BJ (cell line): ENCODE measurements at regions of chr2 and their contacts with region 1.

Region 1: DNA sequence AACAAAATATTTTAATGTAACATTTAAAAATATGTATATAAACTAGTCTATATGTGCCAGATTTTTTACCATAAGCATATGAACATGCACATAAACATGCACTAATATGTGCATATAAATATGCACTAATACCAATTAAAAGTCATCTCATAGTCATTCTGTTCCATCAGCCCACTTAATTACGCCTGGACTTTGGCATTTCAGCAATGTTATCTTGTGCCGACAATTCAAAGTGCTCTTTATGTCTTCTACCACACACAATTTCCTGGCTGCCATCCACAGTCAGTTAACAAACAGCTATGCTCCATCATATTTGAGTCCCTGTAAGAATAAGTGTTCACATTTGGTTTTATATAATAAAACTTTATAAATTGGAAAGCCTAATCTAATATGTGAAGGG is 92.6 kb upstream of the TSPYL6 start:
- DNase-seq: no peak
- H3K4me3 ChIP-seq: no peak overlapping the region
- H3K27me3 ChIP-seq: no peaks in the 10 kb centered on the region
- CTCF ChIP-seq: no peak

Region 2: DNA sequence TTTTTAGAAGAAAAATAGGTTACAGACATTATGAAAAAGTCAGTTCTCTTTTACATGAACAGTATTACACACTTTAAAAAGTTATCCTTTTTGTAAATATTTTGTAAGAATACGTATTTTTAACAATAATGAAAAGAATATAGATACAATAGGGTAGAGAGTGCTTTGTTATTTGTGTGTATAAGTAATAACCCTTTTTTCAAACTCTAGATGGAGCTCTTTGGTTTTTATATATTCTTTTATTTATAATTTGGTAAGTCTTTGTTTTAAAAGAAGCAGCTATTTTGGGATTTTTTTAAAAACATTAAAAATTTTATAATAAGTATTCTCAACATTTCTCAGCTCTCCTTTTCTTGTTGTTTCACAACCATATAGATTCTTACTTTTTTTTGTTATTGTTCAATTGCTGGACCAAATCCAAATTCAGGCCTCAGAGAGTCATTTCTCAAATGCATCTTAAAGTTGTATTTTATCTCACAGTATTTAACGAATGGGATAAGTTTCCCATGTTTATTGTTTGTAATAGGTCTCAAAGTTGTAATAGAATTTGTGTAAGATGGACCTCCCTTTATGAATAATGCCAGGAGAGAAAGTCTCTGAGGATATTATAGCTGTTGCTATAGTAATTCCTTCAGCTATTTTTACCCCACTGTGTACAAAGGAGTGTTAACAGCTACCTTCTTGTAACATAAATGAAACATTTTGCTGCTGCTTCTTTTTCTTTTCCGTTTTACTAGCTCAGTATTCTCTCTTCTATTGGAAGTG is 186.8 kb before region 1 on chr2:
- CTCF ChIA-PET with region 1: no interaction called
- POLR2A ChIA-PET with region 1: no interaction called
- DNase-seq: no peak
- H3K4me3 ChIP-seq: no peak overlapping the region
- H3K27me3 ChIP-seq: no peaks in the 10 kb centered on the region
- CTCF ChIP-seq: no peak

Region 3: GRCh38 chr2:54336136-54336976 is 12.3 kb before region 1 on chr2:
- CTCF ChIA-PET with region 1: interaction called, 11 read pairs
- POLR2A ChIA-PET with region 1: no interaction called
- DNase-seq: peak; percentile 96
- H3K4me3 ChIP-seq: no peak overlapping the region
- H3K27me3 ChIP-seq: no peaks in the 10 kb centered on the region
- CTCF ChIP-seq: no peak